Activated CD4-positive, alpha-beta T cell treated with anti-CD3 and anti-CD28 coated beads, Interleukin-2, amount 10 ng/mL, durations not matched to agents 24 days and 14 days (primary cell): ENCODE measurements at regions of chr2 and their contacts with region 1.

Region 1: DNA sequence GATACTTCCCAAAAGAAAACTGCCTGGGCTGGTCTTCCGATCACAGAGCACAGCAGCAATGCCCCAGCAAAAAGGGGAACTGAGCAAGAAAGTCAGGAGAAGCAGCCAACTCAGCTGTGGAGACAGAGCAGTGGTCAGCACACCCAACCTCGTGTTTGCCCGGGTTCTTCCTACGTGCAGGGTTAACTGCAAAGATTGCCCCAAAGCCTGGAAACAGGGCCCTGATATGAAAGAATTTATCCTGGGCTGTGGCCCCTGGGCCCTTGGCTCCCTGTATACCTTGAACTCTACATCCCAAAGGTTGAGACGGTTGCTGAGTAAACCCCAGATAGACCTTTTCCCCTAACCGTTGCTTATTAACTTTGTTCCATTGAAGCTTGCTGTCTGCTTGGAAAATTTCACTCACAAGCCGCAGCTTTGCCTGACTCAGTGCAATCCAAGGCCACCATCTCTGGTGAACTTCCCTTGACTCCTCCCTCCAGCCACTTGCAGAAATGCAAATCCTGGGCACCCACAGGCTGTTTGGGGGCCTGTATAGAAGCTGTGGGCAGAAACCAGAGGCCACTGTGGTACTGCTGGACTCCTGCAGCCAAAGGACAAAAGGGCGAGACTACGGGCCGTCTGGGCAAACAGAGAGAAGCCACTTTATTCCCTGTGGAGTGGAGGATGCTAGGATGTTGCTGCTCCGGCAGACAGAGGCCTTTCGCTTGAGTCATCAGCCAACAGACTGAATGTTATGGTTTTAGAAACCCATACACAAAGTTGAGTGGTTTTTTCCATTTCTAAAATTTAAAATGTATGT is 18.2 kb downstream of the NRP2 start:
- DNase-seq: no peak
- H3K4me3 Mint-ChIP-seq: peak overlapping the region; percentile 63
- H3K27ac Mint-ChIP-seq: peak overlapping the region; percentile 95
- H3K4me1 Mint-ChIP-seq: peaks cover 43% of the 10 kb centered on the region
- H3K27me3 Mint-ChIP-seq: no peaks in the 10 kb centered on the region

Region 2: DNA sequence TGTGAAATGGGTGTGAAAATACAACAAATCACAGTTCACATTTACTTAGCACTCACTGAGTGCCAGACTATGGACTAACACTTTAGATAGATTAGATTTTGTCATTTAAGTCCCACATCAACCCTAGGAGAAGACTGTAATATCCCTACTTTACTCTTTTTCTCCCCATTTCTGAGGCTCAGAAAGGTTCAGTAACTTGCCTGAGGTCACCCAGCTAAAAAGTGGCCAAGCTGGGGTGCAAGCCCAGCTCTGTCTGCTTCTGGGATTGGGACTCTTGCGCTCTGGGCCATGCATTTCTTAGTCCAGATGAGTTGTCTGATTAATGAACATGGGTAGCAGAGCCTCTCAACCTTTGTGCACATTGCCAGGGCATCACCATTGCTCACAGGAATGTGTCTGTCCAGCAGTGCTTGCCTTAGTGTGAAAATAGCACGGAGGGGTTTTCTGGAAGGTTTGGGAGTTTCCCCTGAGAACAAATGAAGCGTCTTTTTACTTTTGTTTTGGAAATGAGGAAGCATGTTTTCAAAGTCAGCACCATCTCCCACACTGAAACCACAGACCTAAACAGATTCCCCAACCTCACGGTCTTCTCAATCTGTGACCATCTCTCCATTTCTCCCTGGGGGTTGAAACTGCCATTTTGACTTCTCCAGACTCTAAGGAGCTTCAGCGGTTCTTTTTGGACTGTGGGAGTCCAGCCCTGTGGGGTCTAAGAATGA is 13.7 kb after region 1 on chr2:
- intact Hi-C with region 1: loop called (anchors 1 kb)
- DNase-seq: peak; percentile 60
- H3K4me3 Mint-ChIP-seq: peak overlapping the region; percentile 32
- H3K27ac Mint-ChIP-seq: peak overlapping the region; percentile 67
- H3K4me1 Mint-ChIP-seq: peaks cover 62% of the 10 kb centered on the region
- H3K27me3 Mint-ChIP-seq: no peaks in the 10 kb centered on the region